ENCODE measurements at regions of chr2 and their contacts with region 1.

Region 1: DNA sequence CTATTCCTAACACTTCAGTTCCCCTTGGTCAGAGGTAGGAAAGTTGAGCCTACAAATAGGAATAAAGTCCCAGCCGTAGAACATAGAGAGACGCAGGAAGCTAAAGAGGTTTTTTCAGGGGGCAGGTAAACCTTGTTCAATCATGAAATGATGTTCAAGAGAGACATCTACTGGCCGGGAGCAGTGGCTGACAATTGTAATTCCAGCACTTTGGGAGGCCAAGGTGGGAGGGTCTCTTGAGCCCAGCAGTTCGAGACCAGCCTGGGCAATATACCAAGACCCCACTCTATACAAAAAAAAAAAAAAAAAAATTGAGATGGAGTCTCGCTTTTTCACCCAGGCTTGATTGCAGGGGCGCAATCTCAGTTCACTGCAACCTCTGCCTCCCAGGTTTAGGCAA is 66.7 kb upstream of the DNAJC10 start:
- DNase-seq: no peak
- ATAC-seq: no peak
- H3K4me3 Mint-ChIP-seq: no peak overlapping the region
- H3K27ac Mint-ChIP-seq: no peak overlapping the region
- H3K4me1 Mint-ChIP-seq: peaks cover 16% of the 10 kb centered on the region
- H3K27me3 Mint-ChIP-seq: no peaks in the 10 kb centered on the region

Region 2: DNA sequence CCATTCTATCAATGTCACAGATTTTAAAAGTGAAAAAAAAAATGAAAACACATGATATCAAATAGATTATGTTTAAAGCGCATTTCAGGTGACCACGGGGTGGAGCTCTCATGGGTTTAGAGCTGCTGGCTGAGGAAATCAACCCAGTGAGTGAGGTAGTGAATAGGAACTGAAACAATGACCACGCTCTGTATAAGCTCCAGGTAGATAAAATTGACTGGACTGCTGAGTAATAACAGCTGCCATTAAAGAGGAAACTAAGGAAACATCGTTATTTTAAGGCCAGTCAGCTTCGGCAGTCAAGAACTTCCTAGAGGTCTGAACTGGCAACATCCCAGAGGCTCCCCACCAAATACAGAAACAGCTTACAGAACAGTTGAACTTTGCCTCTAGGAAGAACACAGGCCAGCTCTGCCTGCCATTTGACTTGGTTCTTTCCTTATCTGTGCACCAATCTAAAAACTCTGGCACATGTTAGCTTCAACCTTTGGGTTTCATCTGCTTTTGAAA is 408.4 kb before region 1 on chr2:
- CTCF ChIA-PET with region 1: interaction called, 11 read pairs
- DNase-seq: peak; percentile 50
- ATAC-seq: no peak
- H3K4me3 Mint-ChIP-seq: no peak overlapping the region
- H3K27ac Mint-ChIP-seq: no peak overlapping the region
- H3K4me1 Mint-ChIP-seq: peaks cover 2% of the 10 kb centered on the region
- H3K27me3 Mint-ChIP-seq: no peaks in the 10 kb centered on the region

Region 3: DNA sequence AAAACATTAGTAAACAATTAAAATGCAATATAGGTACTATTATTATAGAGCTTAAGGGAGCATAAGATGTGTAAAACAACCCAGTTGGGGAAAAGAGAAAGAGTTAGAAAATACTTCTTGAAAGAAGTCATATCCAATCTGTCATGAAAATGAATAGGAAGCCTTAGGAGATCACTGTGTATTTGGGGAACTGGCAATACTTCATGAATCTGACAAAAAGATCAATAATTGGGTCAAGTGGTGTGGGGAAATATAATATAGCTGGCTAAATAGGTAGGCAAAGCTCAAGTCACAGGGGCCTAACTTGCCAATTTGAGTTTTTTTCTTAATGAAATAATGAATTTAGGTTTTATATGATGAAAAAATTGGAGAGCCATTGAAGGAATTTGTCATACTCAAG is 81.2 kb after region 1 on chr2:
- CTCF ChIA-PET with region 1: no interaction called
- DNase-seq: no peak
- ATAC-seq: no peak
- H3K4me3 Mint-ChIP-seq: no peak overlapping the region
- H3K27ac Mint-ChIP-seq: no peak overlapping the region
- H3K4me1 Mint-ChIP-seq: peaks cover 8% of the 10 kb centered on the region
- H3K27me3 Mint-ChIP-seq: no peaks in the 10 kb centered on the region

Measured in activated CD8-positive, alpha-beta memory T cell treated with anti-CD3 and anti-CD28 coated beads, Interleukin-2, amount 10 ng/mL, durations not matched to agents 7 days and 5 days (primary cell).